Posterior vena cava (tissue), 2 donors: ENCODE measurements at regions of chr1 and their contacts with region 1.

Region 1: GRCh38 chr1:67347688-67348472 is 40.2 kb downstream of the IL12RB2 start:
- DNase-seq: no peak

Region 2: DNA sequence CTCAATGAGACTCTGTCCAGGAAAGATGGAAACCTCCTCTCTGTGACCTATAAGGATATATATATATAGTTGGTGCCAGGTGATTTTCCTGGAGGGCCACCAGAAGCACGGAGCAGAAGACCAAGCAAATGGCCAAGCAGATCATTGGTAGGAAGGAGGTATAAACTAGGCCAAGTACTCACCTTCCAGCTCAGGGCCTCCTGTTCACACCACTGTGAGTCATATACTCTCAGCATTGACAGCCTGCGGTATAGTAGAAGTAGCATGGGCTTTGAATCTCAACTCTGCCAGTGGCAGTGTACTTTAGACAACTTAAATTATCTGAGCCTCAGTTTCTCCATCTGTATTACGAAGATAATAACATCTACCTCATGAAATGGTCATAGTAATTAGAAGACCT is 24.8 kb before region 1 on chr1:
- intact Hi-C with region 1: no loop called
- DNase-seq: no peak

Region 3: DNA sequence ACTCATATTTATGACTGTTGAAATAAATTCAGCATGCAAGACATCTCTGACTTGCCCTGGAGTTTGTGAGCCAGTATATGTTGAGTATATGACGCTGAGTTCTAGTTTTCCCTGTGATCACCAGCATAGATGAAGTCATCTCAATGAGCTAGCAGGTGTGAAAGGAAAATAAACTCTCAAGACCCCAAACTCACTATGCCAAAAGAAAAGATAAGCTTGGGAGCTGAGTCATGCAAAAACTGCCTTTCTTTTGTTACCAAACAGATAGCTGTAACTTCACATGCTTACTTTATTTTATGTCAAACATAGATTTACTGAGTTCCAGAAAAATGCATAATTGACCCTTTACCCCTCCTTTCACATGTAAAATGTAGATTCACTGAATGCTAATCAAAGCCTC is 29.4 kb after region 1 on chr1:
- intact Hi-C with region 1: loop called in 1 of 2 experiments (anchors 1 kb)
- DNase-seq: no peak

Region 4: DNA sequence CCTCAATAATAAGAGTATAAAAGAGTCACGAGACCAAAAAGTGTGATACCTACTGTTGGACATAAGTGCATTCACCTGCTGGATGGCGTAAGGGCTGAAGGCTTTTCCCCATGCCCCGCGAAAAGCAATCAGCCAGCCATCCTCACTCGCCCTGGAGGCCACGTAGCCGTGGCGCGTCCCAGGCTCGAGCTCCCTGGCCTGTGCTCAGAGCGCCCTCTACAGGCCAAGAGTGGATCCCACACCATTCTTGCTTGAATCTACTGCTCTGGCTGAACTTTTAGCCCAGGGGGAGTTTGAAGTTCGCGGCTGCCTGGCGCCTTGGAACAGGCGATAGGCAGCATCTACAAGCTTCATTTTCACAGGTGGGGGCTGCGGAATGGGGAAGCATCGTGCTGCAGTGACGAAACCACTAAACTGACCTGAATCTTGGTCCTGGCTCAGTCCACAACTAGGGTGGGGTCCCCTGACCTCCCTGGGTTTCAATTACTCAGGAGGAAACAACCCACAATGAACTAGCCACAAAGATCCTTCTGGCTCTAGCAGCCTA is 152.6 kb after region 1 on chr1:
- intact Hi-C with region 1: loop called (anchors 5 to 10 kb)
- DNase-seq: peak; percentile 95